ENCODE measurements at regions of chr4 and their contacts with region 1.

Region 1: DNA sequence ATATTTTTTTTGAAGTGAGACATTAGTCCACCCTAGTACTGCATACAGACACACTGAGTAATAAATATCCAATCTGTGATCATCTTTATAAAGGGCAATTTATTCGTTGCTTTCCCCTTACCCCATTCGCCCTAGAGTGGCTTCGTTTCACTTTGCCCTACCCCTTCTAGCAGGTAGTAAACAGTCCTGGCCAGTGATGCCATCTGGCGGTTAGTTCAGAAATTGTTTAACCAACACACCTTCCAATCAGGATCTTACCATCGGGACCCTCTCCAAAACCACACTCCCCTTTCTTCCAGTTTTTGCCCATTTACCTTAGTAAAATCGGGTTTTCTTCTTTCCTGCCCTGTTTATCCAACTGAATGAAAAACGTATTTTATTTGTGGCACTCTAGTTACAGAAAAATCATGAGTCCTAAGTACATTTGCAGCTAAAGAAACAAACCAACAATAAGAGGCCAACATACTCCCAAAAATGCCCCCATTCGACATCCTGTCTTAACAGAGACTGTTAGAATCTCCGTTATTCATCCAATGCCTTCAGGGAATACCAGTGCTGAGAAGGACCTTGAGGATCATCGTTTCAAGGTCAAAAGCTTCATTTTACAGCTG is 2.2 kb downstream of the PPA2 start:
- DNase-seq: peak; percentile 27 to 67
- H3K4me3 ChIP-seq: peak overlapping the region in 1 of 4 experiments; percentile 14; a peak in 1 of 8 replicates
- H3K27ac ChIP-seq: no peak overlapping the region
- H3K4me1 ChIP-seq: peaks cover 0 to 5% (median 3%) of the 10 kb centered on the region in 4 experiments; a peak in 3 of 7 replicates
- H3K27me3 ChIP-seq: peaks cover 0 to 3% (median 0%) of the 10 kb centered on the region in 4 experiments; a peak in 3 of 7 replicates
- CTCF ChIP-seq: peak; percentile 5 to 79 (median 60)
- EP300 ChIP-seq: no peak
- POLR2A ChIP-seq: no peak
- RAD21 ChIP-seq: peak; percentile 83 to 84

Region 2: DNA sequence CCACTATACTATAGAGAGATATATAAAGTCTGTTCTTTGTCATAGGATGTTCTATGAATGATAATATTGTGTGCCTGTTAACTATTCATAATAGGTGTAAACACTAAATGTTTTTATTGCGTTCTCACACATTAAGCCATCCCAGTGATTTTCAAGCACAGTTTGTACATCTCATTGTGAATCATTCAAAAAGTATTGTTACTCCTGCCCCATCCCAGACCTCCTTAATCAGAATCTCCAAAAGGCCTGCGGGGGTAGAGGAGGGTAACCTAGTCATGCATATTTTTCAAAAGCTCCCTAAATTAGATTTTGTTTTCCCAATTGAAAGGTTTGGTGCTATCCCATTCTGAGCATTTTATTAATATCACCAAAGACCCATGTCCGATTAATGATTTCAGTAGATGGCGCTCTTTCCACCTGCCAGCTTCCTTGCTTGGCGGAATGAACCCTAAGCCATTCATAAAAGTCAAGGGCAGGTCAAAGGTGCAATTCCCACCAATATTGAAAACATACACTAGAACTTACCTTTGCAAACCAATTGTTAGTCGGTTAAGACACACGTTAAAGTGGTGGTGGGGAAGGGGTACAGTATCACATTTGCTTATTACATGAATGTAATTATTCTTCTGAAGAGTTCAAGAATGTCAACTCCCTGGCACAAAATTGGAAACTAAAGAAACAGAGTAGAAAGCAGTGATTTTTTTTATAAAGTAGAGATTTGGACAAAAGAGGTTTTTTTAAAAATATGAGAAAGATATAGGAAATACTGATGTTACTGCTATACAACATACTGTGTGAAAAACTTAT is 330.8 kb before region 1 on chr4:
- CTCF ChIA-PET with region 1: interaction called, 15 read pairs
- POLR2A ChIA-PET with region 1: interaction called, 3 read pairs
- DNase-seq: no peak
- H3K4me3 ChIP-seq: no peak overlapping the region
- H3K27ac ChIP-seq: no peak overlapping the region
- H3K4me1 ChIP-seq: peaks cover 0 to under 1% (median 0%) of the 10 kb centered on the region in 4 experiments; a peak in 2 of 7 replicates
- H3K27me3 ChIP-seq: peaks cover 15 to 34% (median 31%) of the 10 kb centered on the region in 4 experiments
- CTCF ChIP-seq: peak in 2 of 3 experiments; percentile 65 to 72; a peak in 3 of 4 replicates
- EP300 ChIP-seq: no peak
- POLR2A ChIP-seq: no peak
- RAD21 ChIP-seq: peak; percentile 85 to 87

Region 3: GRCh38 chr4:105399532-105400161 is 72.0 kb before region 1 on chr4:
- CTCF ChIA-PET with region 1: no interaction called
- POLR2A ChIA-PET with region 1: no interaction called
- DNase-seq: no peak
- H3K4me3 ChIP-seq: no peak overlapping the region
- H3K27ac ChIP-seq: no peak overlapping the region
- H3K4me1 ChIP-seq: peaks cover 0 to 2% (median 0%) of the 10 kb centered on the region in 4 experiments; a peak in 1 of 7 replicates
- H3K27me3 ChIP-seq: no peaks in the 10 kb centered on the region
- CTCF ChIP-seq: no peak
- EP300 ChIP-seq: no peak
- POLR2A ChIP-seq: no peak
- RAD21 ChIP-seq: no peak

Region 4: DNA sequence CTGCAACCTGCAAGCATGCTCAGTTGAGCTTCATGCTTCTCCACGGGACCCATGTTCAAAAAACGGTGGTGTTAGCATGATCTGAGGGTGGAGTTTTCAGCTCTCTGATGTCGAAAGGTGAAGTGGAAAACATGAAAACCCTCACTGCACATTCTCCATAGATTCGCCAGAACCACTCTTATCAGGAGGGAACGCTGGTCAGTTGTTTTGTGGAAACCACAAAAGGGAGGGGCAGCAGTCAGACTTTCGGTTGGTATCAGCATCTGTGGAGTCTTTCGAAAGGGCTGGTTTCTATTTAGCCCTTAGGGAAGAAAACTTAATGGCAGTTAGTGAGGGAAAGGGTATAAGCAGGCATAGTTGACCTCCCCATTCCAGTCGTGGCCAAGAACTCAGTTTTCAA is 10.4 kb before region 1 on chr4:
- CTCF ChIA-PET with region 1: interaction called, 10 read pairs
- POLR2A ChIA-PET with region 1: interaction called, 15 read pairs
- DNase-seq: no peak
- H3K4me3 ChIP-seq: no peak overlapping the region
- H3K27ac ChIP-seq: no peak overlapping the region
- H3K4me1 ChIP-seq: no peaks in the 10 kb centered on the region
- H3K27me3 ChIP-seq: no peaks in the 10 kb centered on the region
- CTCF ChIP-seq: no peak
- EP300 ChIP-seq: no peak
- POLR2A ChIP-seq: no peak
- RAD21 ChIP-seq: no peak

Region 5: GRCh38 chr4:105555409-105555808 is 83.7 kb after region 1 on chr4:
- CTCF ChIA-PET with region 1: interaction called, 4 read pairs
- POLR2A ChIA-PET with region 1: interaction called, 11 read pairs
- DNase-seq: peak; percentile 41 to 80
- H3K4me3 ChIP-seq: no peak overlapping the region
- H3K27ac ChIP-seq: no peak overlapping the region
- H3K4me1 ChIP-seq: peaks cover 0 to 9% (median 6%) of the 10 kb centered on the region in 4 experiments; a peak in 3 of 7 replicates
- H3K27me3 ChIP-seq: peaks cover 57 to 97% (median 87%) of the 10 kb centered on the region in 4 experiments
- CTCF ChIP-seq: no peak
- EP300 ChIP-seq: peak in 1 of 2 experiments; percentile 94; a peak in 1 of 3 replicates
- POLR2A ChIP-seq: no peak
- RAD21 ChIP-seq: no peak

Region 6: GRCh38 chr4:105594099-105594993 is 122.7 kb after region 1 on chr4:
- CTCF ChIA-PET with region 1: no interaction called
- POLR2A ChIA-PET with region 1: no interaction called
- DNase-seq: no peak
- H3K4me3 ChIP-seq: no peak overlapping the region
- H3K27ac ChIP-seq: no peak overlapping the region
- H3K4me1 ChIP-seq: no peaks in the 10 kb centered on the region
- H3K27me3 ChIP-seq: no peaks in the 10 kb centered on the region
- CTCF ChIP-seq: no peak
- EP300 ChIP-seq: no peak
- POLR2A ChIP-seq: no peak
- RAD21 ChIP-seq: no peak

Measured in H1 (cell line).